HEK293 (cell line): ENCODE measurements at regions of chr7 and their contacts with region 1.

Region 1: GRCh38 chr7:142587578-142588191 is 161.6 kb upstream of the PRSS1 start:
- H3K4me3 ChIP-seq: no peak overlapping the region
- H3K27ac ChIP-seq: no peak overlapping the region
- H3K4me1 ChIP-seq: no peaks in the 10 kb centered on the region
- CTCF ChIP-seq: peak; percentile 47; the same call in 1 of the 2 replicates

Region 2: DNA sequence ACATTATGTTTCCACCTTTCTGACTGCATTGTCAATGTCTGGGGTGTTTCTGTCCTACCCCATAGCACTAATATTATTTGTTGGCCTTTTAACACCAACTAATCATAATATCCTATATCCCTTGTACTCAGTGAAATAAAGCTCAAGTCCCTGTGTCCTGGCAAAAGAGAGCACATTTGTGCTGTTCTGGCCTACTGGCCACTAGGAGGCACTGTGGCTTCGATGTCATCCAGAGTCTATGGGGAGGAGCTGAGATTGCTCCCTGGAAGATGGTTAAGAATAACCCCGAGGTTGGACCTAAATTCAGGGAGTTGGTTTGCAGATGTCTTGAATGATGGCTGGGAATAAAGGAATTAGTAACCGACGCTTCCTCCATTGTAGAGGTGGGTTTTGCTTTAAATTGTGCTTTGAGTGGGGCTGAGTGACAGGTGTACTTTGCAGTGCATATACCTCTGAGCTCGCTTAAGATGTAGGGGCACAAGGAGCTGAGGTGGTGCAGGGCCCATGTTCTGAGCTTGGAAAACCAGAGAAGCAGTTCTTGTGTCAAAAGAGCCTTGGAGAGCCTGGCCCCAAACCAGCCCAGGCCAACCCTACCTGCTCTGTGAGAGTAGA is 29.6 kb before region 1 on chr7:
- CTCF ChIA-PET with region 1: interaction called, 42 read pairs
- POLR2A ChIA-PET with region 1: no interaction called
- H3K4me3 ChIP-seq: no peak overlapping the region
- H3K27ac ChIP-seq: no peak overlapping the region
- H3K4me1 ChIP-seq: peaks cover 3% of the 10 kb centered on the region; the same call in 1 of the 2 replicates
- CTCF ChIP-seq: 0 out of 2 replicates have a peak, but pooled peaks have one; percentile 25

Region 3: GRCh38 chr7:142568435-142569097 is 19.1 kb before region 1 on chr7:
- CTCF ChIA-PET with region 1: interaction called, 22 read pairs
- POLR2A ChIA-PET with region 1: no interaction called
- H3K4me3 ChIP-seq: no peak overlapping the region
- H3K27ac ChIP-seq: no peak overlapping the region
- H3K4me1 ChIP-seq: no peaks in the 10 kb centered on the region
- CTCF ChIP-seq: no peak

Region 4: DNA sequence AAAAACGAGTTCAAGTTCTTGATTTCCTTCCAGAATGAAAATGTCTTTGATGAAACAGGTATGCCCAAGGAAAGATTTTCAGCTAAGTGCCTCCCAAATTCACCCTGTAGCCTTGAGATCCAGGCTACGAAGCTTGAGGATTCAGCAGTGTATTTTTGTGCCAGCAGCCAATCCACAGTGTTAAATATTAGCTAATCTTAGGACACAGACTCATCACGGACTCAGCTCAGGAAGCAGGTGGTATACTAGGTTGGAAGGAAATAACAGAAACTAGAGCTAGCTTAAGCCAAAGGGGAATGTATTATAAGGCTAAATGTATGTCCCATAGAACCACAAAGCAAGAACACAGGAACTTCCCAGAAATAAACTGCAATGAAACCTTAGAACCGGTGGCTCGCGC is 10.6 kb after region 1 on chr7:
- CTCF ChIA-PET with region 1: interaction called, 27 read pairs
- POLR2A ChIA-PET with region 1: no interaction called
- H3K4me3 ChIP-seq: no peak overlapping the region
- H3K27ac ChIP-seq: no peak overlapping the region
- H3K4me1 ChIP-seq: no peaks in the 10 kb centered on the region
- CTCF ChIP-seq: no peak

Region 5: GRCh38 chr7:142603870-142604448 is 16.3 kb after region 1 on chr7:
- CTCF ChIA-PET with region 1: interaction called, 19 read pairs
- POLR2A ChIA-PET with region 1: no interaction called
- H3K4me3 ChIP-seq: no peak overlapping the region
- H3K27ac ChIP-seq: no peak overlapping the region
- H3K4me1 ChIP-seq: no peaks in the 10 kb centered on the region
- CTCF ChIP-seq: peak; percentile 40; the same call in 1 of the 2 replicates